ENCODE measurements at regions of chr4 and their contacts with region 1.

Region 1: DNA sequence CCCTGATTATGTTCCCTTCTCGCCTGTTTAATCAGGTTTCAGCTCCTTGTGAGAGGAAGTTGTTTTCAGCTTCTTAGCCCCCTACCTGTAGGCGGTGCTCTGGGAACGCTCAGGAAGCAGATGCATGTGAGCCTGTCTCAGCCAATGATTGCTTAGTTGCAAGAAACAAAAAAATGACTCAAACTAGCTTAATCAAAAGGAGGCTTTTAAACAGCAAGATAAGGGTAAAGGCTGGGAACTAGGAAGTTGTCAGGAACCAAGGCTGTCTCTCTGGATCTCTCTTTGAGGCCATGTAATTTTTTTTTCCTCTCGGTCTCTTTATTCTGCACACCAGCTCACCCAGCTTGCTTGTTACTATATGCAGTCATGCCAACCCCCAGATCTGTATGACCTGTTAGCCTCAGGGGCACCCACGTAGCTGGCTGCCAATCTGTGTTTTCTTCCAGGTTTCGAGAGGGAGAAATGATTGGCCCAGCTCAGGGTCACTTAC is 109.1 kb downstream of the PTTG2 start:
- DNase-seq: no peak

Region 2: DNA sequence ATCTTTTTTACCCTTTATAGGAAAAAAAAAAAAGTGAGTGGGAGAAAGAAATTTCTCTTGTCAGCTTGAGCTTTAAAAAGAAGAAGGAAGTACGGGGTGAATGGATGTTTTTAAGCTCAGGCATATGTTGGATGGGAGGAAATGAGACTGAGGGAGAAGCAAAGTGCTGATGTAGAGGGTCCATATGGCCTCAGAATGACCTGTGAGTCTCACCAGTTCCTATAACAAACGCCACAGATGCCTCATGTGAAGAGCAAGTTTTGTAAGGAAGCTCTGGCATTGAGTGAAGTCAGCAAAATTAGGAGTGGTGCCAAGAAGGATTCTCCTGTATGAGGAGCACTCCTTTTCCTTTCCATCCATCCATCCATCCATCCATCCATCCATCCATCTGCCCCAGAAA is 105.5 kb after region 1 on chr4:
- intact Hi-C with region 1: loop called (anchors 5 kb)
- DNase-seq: no peak

Region 3: DNA sequence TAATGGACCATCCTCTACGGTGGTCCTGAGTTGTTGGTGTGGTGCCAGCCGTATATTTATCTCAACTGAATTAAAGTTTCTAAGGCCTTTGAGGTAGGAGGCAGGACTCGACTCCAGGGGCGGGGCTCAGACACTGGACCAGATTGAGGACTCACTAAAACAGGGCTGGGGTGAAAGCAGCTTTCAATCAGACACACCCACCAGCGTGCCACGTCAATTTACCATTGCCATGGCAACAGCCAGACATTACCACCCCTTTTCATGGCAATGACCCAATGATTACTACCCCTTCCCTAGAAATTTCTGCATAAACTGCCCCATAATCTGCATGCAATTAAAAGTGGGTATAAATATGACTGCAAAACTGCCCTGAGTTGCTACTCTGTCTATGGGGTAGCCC is 742.0 kb after region 1 on chr4:
- intact Hi-C with region 1: no loop called
- DNase-seq: no peak